Activated B cell treated with CpG ODN at 0.5 μM for 24 hours (primary cell): ENCODE measurements at regions of chr1 and their contacts with region 1.

Region 1: DNA sequence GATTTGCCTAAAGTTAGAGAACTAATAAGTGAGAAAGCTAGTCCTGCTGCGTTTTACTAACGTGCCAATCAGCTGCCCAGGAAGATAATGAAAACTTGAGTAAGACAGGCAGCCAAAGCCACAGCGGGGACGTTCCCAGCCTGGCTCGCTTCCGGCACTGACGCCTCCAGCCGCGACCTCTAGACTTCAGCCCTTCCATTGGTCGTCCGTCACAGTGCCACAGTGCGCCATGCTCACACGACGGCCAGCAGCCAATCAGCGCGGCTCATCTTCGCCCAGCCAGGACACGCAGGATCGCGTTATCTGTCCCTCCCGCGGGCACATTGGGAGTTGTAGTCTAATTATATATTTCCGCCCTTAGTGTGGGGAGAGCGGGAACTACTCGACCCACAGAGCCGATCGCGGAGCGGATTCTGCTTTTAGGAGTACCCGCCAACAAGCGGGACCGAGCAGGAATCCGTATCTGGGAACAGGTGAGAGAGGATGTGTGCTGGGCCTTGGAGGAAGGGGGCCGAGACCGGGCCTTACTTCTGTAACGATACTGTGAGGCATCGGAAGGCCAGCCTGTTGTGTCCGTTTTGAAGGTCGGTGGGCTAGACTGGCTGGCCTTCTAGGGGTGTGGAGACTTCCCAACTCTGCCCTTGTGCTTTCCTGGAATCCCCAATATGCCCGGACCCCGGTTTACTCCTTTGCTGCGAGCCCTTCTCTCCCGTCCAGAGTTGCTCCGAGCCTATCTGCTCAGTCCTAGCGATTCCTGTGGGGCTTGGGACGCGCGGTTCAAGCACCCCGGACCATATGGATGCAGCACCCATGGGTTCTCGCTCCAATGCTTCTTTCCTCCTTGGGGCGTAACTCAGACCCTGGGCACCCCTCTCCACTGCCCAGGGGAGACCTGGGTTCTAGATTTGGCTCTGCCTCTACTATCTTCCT is at the start of gene FDPS:
- DNase-seq: peak; percentile 87
- ATAC-seq: peak; percentile 97
- H3K4me3 Mint-ChIP-seq: peak within 1 kb of the TSS; percentile 94
- H3K27ac Mint-ChIP-seq: peak within 1 kb of the TSS; percentile 92
- H3K4me1 Mint-ChIP-seq: peaks cover 32% of the 10 kb centered on the region
- H3K27me3 Mint-ChIP-seq: no peaks in the 10 kb centered on the region
- CTCF ChIP-seq: no peak
- total RNA-seq, gene FDPS: 241 and 242 TPM in 2 replicates

Region 2: DNA sequence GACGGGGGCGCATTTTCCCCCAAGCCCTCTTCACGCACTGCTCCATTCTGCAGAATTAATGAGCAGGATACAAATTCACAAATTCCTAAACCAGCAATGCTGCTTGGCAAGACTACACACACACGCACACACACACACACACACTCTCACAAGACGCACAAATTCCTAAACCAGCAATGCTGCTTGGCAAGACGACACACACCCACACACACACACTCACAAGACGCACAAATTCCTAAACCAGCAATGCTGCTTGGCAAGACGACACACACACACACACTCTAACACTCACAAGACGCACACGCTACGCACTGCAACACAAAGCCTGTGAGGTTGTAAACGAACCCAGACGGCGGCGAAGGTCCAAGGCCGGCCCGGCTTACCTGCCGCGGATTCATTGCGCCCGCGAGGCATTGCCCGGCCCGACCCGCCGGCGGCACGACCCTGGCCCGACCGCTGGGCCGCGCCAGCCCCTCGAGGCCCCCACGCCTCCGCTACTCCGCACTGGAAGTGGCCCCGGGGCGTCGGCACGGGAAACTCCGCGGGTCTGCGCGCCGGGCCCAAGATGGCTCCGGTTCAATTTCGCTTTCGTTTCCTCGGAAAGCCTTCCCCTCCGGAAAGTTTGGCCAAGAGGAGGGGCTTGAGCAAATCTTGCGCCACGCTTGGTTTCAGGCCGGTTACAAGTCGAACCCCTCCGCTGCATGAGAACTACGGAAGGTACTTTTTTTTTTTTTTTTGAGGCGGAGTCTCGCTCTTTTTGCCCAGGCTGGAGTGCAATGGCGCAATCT is 701.0 kb before region 1 on chr1 and contains the start of gene ADAR:
- CTCF ChIA-PET with region 1: no interaction called
- POLR2A ChIA-PET with region 1: interaction called, 13 read pairs
- intact Hi-C with region 1: no loop called
- DNase-seq: peak; percentile 80
- ATAC-seq: peak; percentile 91
- H3K4me3 Mint-ChIP-seq: peak within 1 kb of the TSS; percentile 89
- H3K27ac Mint-ChIP-seq: peak within 1 kb of the TSS; percentile 90
- H3K4me1 Mint-ChIP-seq: peaks cover 73% of the 10 kb centered on the region
- H3K27me3 Mint-ChIP-seq: no peaks in the 10 kb centered on the region
- CTCF ChIP-seq: no peak
- total RNA-seq, gene ADAR: 209 and 216 TPM in 2 replicates

Region 3: GRCh38 chr1:155208541-155209311 is 100.0 kb before region 1 on chr1 and contains the start of gene MTX1:
- CTCF ChIA-PET with region 1: no interaction called
- POLR2A ChIA-PET with region 1: no interaction called
- intact Hi-C with region 1: loop called (anchors 1 kb)
- DNase-seq: peak; percentile 85
- ATAC-seq: peak; percentile 81
- H3K4me3 Mint-ChIP-seq: peak within 1 kb of the TSS; percentile 85
- H3K27ac Mint-ChIP-seq: peak within 1 kb of the TSS; percentile 91
- H3K4me1 Mint-ChIP-seq: peaks cover 20% of the 10 kb centered on the region
- H3K27me3 Mint-ChIP-seq: no peaks in the 10 kb centered on the region
- CTCF ChIP-seq: no peak
- total RNA-seq, gene MTX1: 36.7 and 38.2 TPM in 2 replicates

Region 4: GRCh38 chr1:155244368-155245162 is 64.2 kb before region 1 on chr1:
- CTCF ChIA-PET with region 1: interaction called, 23 read pairs
- POLR2A ChIA-PET with region 1: interaction called, 6 read pairs
- intact Hi-C with region 1: loop called (anchors 1 kb)
- DNase-seq: peak; percentile 87
- ATAC-seq: peak; percentile 97
- H3K4me3 Mint-ChIP-seq: peak overlapping the region; percentile 85
- H3K27ac Mint-ChIP-seq: peak overlapping the region; percentile 96
- H3K4me1 Mint-ChIP-seq: peaks cover 39% of the 10 kb centered on the region
- H3K27me3 Mint-ChIP-seq: peaks cover 2% of the 10 kb centered on the region
- CTCF ChIP-seq: no peak

Region 5: GRCh38 chr1:155261852-155262673 is 46.7 kb before region 1 on chr1 and contains the start of gene SCAMP3:
- CTCF ChIA-PET with region 1: no interaction called
- POLR2A ChIA-PET with region 1: interaction called, 5 read pairs
- intact Hi-C with region 1: loop called (anchors 1 kb)
- DNase-seq: peak; percentile 71
- ATAC-seq: peak; percentile 95
- H3K4me3 Mint-ChIP-seq: peak within 1 kb of the TSS; percentile 98
- H3K27ac Mint-ChIP-seq: peak within 1 kb of the TSS; percentile 92
- H3K4me1 Mint-ChIP-seq: peaks cover 33% of the 10 kb centered on the region
- H3K27me3 Mint-ChIP-seq: no peaks in the 10 kb centered on the region
- CTCF ChIP-seq: no peak
- total RNA-seq, gene SCAMP3: 71.8 and 78.6 TPM in 2 replicates

Region 6: GRCh38 chr1:155562581-155563376 is 254.0 kb after region 1 on chr1 and contains the start of gene ASH1L:
- CTCF ChIA-PET with region 1: no interaction called
- POLR2A ChIA-PET with region 1: no interaction called
- intact Hi-C with region 1: loop called (anchors 1 kb)
- DNase-seq: peak; percentile 90
- ATAC-seq: peak; percentile 80
- H3K4me3 Mint-ChIP-seq: peak within 1 kb of the TSS; percentile 99
- H3K27ac Mint-ChIP-seq: peak within 1 kb of the TSS; percentile 98
- H3K4me1 Mint-ChIP-seq: peaks cover 41% of the 10 kb centered on the region
- H3K27me3 Mint-ChIP-seq: no peaks in the 10 kb centered on the region
- CTCF ChIP-seq: no peak
- total RNA-seq, gene ASH1L: 75.6 and 90.6 TPM in 2 replicates